AG04449 (cell line): ENCODE measurements at regions of chr1 and their contacts with region 1.

Region 1: GRCh38 chr1:39799770-39800470 is 11.3 kb upstream of the BMP8B start:
- DNase-seq: peak; percentile 75
- H3K4me3 ChIP-seq: 0 out of 2 replicates have a peak overlapping the region, but pooled peaks have one; percentile 12
- CTCF ChIP-seq: peak; percentile 85

Region 2: GRCh38 chr1:39779821-39780220 is 20.1 kb before region 1 on chr1:
- CTCF ChIA-PET with region 1: interaction called, 18 read pairs
- POLR2A ChIA-PET with region 1: no interaction called
- DNase-seq: no peak
- H3K4me3 ChIP-seq: no peak overlapping the region
- CTCF ChIP-seq: no peak

Region 3: GRCh38 chr1:39788758-39789570 is 11.0 kb before region 1 on chr1 and contains the start of gene BMP8B:
- CTCF ChIA-PET with region 1: interaction called, 10 read pairs
- POLR2A ChIA-PET with region 1: no interaction called
- DNase-seq: no peak
- H3K4me3 ChIP-seq: peak within 1 kb of the TSS; percentile 40
- CTCF ChIP-seq: no peak